ENCODE measurements at regions of chr7 and their contacts with region 1.

Region 1: DNA sequence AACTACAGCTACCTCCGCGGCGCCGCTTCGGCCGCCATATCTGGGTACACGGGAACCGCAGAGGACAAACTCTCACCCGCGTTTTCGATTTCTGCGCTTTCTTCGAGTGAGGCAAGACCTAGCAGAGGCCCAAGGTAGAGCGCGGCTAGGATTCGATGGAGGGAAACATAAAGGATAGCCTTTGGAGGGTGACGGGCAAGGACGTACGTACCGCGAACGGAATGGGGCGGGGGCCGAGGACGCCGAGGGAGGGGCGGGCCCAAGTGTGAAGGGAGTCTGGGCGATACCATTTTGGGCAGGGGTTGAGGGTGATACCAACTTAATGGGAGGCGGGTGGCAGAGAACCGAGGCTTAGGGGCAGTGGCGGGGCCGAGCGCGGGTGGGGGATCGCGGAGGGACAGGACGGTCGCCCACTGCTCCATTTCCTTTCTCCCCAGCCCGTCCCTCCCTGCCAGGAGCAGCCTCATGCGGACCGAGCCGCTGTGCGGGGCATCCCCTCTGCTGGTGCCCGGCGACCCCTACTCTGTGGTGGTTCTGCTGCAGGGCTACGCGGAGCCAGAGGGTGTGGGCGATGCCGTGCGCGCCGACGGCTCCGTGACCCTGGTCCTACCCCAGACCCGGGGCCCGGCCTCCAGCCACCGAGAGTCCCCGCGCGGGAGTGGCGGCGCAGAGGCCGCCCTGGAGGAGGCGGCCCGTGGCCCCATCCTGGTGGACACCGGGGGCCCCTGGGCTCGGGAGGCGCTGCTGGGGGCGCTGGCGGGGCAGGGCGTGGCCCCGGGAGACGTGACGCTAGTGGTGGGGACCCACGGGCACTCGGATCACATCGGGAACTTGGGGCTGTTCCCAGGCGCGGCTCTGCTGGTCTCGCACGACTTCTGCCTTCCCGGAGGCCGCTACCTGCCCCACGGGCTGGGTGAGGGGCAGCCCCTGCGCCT is at the start of gene MBLAC1:
- DNase-seq: peak; percentile 97
- H3K4me3 Mint-ChIP-seq: peak within 1 kb of the TSS; percentile 99
- H3K27ac Mint-ChIP-seq: peak within 1 kb of the TSS; percentile 100
- H3K4me1 Mint-ChIP-seq: peaks cover 22% of the 10 kb centered on the region
- H3K27me3 Mint-ChIP-seq: no peaks in the 10 kb centered on the region
- total RNA-seq, gene MBLAC1: 3.0 and 3.5 TPM in 2 replicates

Region 2: DNA sequence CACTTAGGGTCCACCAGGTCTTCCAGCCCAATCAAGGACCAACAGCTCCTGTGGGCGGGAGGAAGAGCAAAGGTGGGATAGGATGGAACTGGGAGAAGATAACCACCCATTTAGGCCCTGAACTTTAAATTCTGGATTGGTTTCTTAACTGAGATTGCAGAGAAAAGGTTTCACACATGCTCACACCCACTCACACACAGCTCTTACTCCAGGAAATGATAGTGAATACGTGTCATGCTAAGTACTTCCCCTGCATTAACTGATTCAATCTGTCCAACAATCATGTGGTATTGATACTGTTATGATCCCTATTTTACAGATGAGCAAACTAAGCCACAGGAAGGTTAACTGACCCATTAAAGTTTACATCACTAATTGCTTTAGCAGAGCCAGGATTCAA is 338.6 kb before region 1 on chr7:
- intact Hi-C with region 1: no loop called
- DNase-seq: peak; percentile 58
- H3K4me3 Mint-ChIP-seq: no peak overlapping the region
- H3K27ac Mint-ChIP-seq: peak overlapping the region; percentile 20
- H3K4me1 Mint-ChIP-seq: peaks cover 17% of the 10 kb centered on the region
- H3K27me3 Mint-ChIP-seq: no peaks in the 10 kb centered on the region

Region 3: GRCh38 chr7:100015232-100016209 is 111.7 kb before region 1 on chr7 and contains the start of gene ZKSCAN1:
- intact Hi-C with region 1: loop called (anchors 5 kb)
- DNase-seq: peak; percentile 96
- H3K4me3 Mint-ChIP-seq: peak within 1 kb of the TSS; percentile 95
- H3K27ac Mint-ChIP-seq: peak within 1 kb of the TSS; percentile 94
- H3K4me1 Mint-ChIP-seq: peaks cover 31% of the 10 kb centered on the region
- H3K27me3 Mint-ChIP-seq: no peaks in the 10 kb centered on the region
- total RNA-seq, gene ZKSCAN1: 54.8 and 56.3 TPM in 2 replicates

Region 4: DNA sequence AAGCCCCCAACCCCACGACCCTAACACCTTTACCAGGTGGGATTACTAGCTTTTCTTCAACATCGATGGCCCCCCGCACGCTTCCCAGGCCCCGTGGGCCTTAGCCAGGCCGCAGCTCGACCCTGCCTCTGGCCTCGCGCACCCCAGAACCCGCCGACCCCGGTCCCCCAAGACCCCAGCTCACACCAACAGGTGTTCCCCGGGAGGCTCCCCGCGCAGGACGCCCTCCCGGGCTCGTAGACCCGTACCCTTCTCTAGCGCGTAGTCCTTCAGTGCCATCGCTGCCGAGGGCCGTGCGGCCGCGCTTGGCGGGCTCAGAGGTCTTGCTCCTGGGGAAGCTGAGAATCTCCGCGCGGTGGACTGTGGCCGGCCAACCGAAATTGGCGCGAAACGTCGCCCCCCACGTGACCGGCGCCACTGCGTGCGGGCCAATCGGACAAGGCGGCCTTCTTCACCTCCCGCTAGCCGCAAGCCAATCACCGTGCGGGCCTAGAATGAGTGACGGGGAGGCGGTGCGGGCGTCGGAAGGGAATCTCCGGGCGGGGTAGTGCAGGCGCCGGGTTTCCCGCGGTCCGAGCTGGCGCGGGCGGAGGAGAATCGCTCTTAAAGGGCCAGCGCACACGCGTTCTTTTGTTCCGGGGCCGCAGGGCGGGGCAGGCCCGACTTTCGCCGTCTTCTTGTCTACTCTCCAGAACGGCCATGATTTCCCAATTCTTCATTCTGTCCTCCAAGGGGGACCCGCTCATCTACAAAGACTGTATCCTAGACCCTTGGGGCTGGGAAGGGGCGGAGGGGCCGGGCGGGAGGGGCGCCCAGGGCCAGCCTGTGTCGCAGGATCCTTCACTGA is 26.0 kb before region 1 on chr7 and contains the starts of genes AP4M1 and MCM7:
- intact Hi-C with region 1: loop called (anchors 1 kb)
- DNase-seq: peak; percentile 99
- H3K4me3 Mint-ChIP-seq: peak within 1 kb of the TSS; percentile 94
- H3K27ac Mint-ChIP-seq: peak within 1 kb of the TSS; percentile 94
- H3K4me1 Mint-ChIP-seq: peaks cover 35% of the 10 kb centered on the region
- H3K27me3 Mint-ChIP-seq: no peaks in the 10 kb centered on the region
- total RNA-seq, gene AP4M1: 13.5 and 16.4 TPM in 2 replicates
- total RNA-seq, gene MCM7: 464 and 469 TPM in 2 replicates

Region 5: GRCh38 chr7:100137851-100138760 is 10.9 kb after region 1 on chr7:
- intact Hi-C with region 1: no loop called
- DNase-seq: peak; percentile 69
- H3K4me3 Mint-ChIP-seq: no peak overlapping the region
- H3K27ac Mint-ChIP-seq: peak overlapping the region; percentile 52
- H3K4me1 Mint-ChIP-seq: peaks cover 17% of the 10 kb centered on the region
- H3K27me3 Mint-ChIP-seq: no peaks in the 10 kb centered on the region

Region 6: DNA sequence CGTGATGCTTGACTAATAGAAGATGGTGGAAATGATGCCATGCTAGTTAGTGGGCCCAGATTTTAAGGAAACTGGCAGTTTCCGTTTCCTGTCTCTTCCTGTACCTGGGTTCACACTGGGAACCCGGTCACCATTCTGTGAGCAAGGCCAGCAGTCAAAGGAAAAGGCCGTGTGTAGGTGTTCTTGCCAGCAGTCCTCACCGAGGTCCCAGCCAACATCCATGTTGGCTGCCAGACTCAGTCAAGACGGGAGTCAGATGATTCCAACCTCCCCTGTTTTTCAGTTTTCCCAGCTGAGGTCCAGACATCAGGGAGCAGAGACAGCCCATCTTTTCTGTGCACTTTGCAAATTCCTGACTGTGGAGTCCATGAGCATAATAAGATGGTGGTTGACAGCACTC is 215.6 kb after region 1 on chr7:
- intact Hi-C with region 1: loop called (anchors 1 kb)
- DNase-seq: no peak
- H3K4me3 Mint-ChIP-seq: no peak overlapping the region
- H3K27ac Mint-ChIP-seq: no peak overlapping the region
- H3K4me1 Mint-ChIP-seq: peaks cover 30% of the 10 kb centered on the region
- H3K27me3 Mint-ChIP-seq: peaks cover 2% of the 10 kb centered on the region

Region 7: DNA sequence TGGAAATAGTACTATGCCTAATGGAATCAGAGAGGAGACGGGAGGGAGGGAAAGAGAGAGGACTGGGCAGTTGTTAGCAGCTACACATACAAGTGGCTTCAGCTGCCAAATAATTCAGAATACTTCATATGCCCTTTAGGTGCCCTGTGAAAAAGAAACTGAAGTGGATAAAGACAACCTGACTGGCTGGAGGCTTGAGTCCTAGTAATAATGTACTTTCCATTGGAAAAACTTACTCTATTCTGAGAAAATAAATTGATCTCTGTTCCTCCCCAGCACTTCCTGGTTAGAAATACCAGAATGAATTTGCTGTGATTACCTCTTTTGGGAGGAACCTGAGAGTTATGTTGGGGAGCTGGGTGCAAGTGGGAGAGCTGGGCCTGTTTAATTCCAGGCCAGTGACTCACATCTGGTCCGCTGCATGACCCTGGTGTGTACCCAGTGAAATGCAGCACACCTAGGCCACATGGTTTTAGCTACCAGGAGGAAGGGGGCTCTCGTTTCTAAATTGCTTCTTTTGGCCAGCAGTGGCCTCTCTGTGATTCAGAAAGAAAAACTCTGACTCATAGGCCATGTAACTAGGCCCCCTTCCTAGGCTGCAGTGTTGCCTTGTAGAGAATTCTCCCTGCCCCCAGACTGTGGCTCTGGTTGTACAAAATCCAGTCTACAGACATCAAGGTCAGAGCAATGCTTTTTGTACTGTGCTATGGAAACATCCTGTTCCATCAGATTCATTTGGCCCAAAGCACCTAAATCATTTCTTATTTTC is 418.3 kb after region 1 on chr7:
- intact Hi-C with region 1: loop called (anchors 10 kb)
- DNase-seq: peak; percentile 79
- H3K4me3 Mint-ChIP-seq: peak overlapping the region; percentile 99
- H3K27ac Mint-ChIP-seq: peak overlapping the region; percentile 99
- H3K4me1 Mint-ChIP-seq: peaks cover 83% of the 10 kb centered on the region
- H3K27me3 Mint-ChIP-seq: no peaks in the 10 kb centered on the region